WTC11 (cell line): ENCODE measurements at regions of chr14 and their contacts with region 1.

Region 1: GRCh38 chr14:69543341-69544249 is 31.1 kb downstream of the CCDC177 start:
- DNase-seq: no peak
- ATAC-seq: no peak
- H3K4me3 Mint-ChIP-seq: no peak overlapping the region
- H3K27ac Mint-ChIP-seq: no peak overlapping the region
- H3K4me1 Mint-ChIP-seq: peaks cover 10% of the 10 kb centered on the region
- H3K27me3 Mint-ChIP-seq: peaks cover 12% of the 10 kb centered on the region; the same call in 1 of the 2 replicates
- CTCF ChIP-seq: no peak

Region 2: DNA sequence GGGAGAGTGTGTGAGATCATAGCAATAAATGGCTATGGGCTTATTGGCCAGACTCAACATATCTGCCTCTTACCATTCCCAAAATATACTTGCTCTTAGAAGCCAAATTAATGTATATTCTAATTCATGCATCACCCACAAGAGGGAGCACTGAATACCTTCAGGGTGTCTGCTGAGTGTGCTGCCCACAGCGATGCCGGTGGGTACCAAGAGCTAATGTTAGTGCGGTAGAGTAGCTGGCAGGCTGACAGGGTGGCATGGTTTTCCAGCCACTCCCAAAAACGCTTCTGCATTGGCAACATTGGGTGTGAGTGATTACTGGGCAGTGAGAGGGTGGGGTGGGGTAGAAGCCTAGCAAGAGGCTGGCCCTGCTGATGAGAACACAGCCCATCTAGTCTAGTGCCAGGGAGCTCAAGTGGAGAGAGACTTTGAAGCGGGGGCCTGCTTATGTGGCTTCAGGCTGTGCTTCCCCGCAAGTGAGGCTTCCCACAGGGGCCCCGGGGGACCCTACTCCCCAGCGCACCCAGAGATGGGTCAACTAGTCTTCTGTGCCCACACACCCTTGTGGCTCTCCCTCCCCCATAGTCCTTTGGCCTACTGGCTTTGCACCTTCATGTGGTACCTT is 68.3 kb before region 1 on chr14:
- CTCF ChIA-PET with region 1: interaction called, 16 read pairs
- POLR2A ChIA-PET with region 1: no interaction called
- DNase-seq: no peak
- ATAC-seq: peak; percentile 78
- H3K4me3 Mint-ChIP-seq: no peak overlapping the region
- H3K27ac Mint-ChIP-seq: no peak overlapping the region
- H3K4me1 Mint-ChIP-seq: no peaks in the 10 kb centered on the region
- H3K27me3 Mint-ChIP-seq: peaks cover 3% of the 10 kb centered on the region
- CTCF ChIP-seq: no peak; the same call in 1 of the 2 replicates

Region 3: DNA sequence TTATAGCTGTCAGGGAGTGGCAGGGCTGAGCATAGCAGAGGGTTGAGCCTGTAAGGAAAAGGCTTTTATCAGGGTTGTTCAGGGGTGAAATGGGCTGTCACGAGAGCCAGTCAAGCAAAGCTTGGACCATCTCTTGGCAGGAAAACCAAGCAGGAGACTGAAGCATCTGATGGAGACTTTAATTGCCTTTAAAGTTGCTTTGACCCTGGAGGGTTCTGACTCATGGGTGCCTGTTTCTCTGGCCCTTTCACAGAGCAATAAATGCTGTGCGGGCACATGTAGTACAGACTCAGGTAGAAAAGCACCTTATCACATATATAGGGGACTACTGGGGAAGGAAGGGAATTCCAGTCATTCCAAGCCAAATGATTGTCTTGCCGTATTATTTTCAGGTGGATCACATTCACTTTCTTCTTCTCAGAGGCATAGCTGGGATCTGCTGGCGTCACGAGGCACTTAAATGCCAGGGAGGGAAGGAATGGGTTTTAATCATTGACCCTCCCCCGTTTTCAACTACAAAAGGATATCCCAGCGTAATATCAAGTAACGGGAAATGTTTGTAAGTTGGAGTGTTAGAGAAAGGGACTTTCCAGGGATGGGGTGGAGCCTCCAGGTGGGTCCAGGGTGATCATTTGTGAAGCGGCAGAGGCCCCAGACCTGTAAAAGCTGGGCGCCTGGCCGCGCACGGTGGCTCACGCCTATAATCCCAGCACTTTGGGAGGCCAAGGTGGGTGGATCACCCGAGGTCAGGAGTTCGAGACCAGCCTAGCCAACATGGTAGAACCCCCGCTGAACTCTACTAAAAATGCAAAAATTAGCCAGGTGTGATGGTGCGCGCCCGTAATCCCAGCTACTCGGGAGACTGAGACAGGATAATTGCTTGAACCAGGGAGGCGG is 24.1 kb before region 1 on chr14:
- CTCF ChIA-PET with region 1: interaction called, 27 read pairs
- POLR2A ChIA-PET with region 1: no interaction called
- DNase-seq: no peak
- ATAC-seq: peak; percentile 20; the same call in 1 of the 2 replicates
- H3K4me3 Mint-ChIP-seq: no peak overlapping the region
- H3K27ac Mint-ChIP-seq: 0 out of 2 replicates have a peak overlapping the region, but pooled peaks have one; percentile 4
- H3K4me1 Mint-ChIP-seq: peaks cover 23% of the 10 kb centered on the region
- H3K27me3 Mint-ChIP-seq: no peaks in the 10 kb centered on the region
- CTCF ChIP-seq: no peak

Region 4: GRCh38 chr14:69559581-69560011 is 16.0 kb after region 1 on chr14:
- CTCF ChIA-PET with region 1: interaction called, 45 read pairs
- POLR2A ChIA-PET with region 1: no interaction called
- DNase-seq: no peak
- ATAC-seq: peak; percentile 55
- H3K4me3 Mint-ChIP-seq: no peak overlapping the region
- H3K27ac Mint-ChIP-seq: no peak overlapping the region
- H3K4me1 Mint-ChIP-seq: peaks cover 30% of the 10 kb centered on the region
- H3K27me3 Mint-ChIP-seq: no peaks in the 10 kb centered on the region; the same call in 1 of the 2 replicates
- CTCF ChIP-seq: no peak

Region 5: DNA sequence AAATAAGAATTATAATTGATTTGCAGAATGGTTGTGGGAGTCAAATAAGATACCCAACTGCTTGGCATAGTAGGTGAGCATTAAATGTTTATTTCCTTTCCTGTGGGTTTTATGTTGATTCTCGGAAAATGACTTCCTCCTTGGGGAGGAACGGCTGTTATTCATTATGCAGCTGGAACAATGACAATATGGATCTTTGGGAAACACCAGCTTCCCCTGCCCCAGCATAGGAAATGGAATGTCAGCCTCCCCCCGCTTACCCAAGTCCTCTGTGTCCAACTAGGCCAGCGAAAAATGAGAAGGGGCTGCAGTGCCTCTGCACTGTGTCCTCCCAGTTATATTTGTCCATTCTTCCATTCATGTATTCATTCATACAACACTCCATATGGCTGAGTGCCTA is 42.8 kb after region 1 on chr14:
- CTCF ChIA-PET with region 1: interaction called, 10 read pairs
- POLR2A ChIA-PET with region 1: no interaction called
- DNase-seq: no peak
- ATAC-seq: no peak
- H3K4me3 Mint-ChIP-seq: no peak overlapping the region
- H3K27ac Mint-ChIP-seq: no peak overlapping the region
- H3K4me1 Mint-ChIP-seq: peaks cover 4% of the 10 kb centered on the region
- H3K27me3 Mint-ChIP-seq: no peaks in the 10 kb centered on the region
- CTCF ChIP-seq: no peak